H1 (cell line): ENCODE measurements at regions of chrX and their contacts with region 1.

Region 1: DNA sequence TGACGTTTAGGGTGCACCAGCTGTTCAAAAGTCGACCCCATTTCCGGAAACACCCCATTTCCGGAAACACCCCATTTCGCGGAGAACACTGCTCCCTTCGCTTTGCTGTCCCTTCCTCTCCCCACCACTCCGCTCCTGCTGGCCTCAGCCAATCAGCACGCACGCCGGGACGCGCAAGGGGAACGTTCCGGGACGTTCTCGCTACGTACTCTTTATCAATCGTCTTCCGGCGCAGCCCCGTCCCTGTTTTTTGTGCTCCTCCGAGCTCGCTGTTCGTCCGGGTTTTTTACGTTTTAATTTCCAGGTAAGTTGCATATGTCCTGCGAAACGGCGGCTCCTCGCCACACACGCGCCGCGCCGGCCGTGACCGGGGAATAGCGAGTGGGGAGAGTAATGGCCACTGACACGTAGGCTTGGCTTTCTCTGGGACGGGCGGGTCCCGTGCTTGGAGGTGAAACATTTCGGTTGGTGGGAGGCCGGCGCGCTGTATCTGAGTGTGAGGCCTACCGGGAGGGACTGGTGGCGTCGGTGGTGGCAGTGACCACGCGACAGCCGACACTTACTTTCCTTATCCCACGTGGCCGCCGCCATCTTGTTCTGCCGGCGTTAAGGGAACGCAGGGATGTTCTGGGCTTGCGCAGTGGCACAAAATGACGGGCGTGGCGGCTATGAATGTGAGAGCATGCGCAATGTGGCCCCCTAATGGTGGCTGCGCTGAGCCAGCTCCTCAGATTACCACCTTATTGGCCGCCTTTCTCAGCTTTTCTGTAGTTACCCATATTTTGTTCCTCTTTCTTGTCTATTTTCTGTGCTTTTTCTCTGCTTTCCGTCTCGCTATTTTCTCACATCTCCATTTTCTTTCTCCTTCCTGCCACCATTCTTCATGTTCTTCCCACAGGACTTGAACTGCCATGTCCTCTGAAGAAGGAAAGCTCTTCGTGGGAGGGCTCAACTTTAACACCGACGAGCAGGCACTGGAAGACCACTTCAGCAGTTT is at the start of gene RBM3:
- DNase-seq: peak; percentile 71 to 77
- H3K4me3 ChIP-seq: peak within 1 kb of the TSS; percentile 75 to 96 (median 84)
- H3K27ac ChIP-seq: peak within 1 kb of the TSS; percentile 98
- H3K4me1 ChIP-seq: peaks cover 0 to 5% (median 0%) of the 10 kb centered on the region in 4 experiments; a peak in 5 of 7 replicates
- H3K27me3 ChIP-seq: no peaks in the 10 kb centered on the region
- CTCF ChIP-seq: peak; percentile 2 to 39 (median 35); a peak in 2 of 4 replicates
- EP300 ChIP-seq: no peak
- POLR2A ChIP-seq: peak; percentile 55 to 92
- RAD21 ChIP-seq: no peak
- total RNA-seq, gene RBM3: 159 and 164 TPM in 2 replicates

Region 2: DNA sequence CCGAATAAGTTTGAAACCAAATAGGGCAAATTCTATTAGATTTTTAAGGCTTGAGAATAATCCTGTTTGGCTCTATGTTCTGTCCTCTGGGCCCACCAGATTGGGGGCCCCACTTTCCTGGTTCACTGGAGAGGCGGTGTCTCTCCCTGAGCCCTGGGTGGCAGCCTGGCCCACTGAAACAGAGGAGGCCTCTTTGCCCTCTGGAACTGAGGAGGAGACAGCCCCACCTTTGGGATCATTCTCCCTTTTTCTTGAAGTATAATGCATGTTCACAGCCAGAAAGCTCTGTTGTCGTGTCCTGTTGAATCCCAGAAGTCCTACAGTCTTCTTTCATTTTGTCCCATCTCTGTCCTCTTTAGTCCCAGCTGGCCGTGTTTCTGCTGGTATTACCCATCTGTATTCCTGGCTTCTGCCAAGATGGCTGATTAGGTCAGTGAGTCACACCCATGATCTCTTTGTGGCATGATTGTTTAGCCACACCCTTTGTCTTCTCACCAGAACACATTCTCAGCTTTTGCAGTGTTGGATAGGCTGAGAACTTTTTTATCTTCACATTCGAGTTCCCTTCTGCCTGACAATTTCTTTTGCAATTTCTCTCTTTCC is 43.1 kb before region 1 on chrX:
- CTCF ChIA-PET with region 1: no interaction called
- POLR2A ChIA-PET with region 1: interaction called, 10 read pairs
- DNase-seq: no peak
- H3K4me3 ChIP-seq: no peak overlapping the region
- H3K27ac ChIP-seq: no peak overlapping the region
- H3K4me1 ChIP-seq: no peaks in the 10 kb centered on the region
- H3K27me3 ChIP-seq: no peaks in the 10 kb centered on the region
- CTCF ChIP-seq: no peak
- EP300 ChIP-seq: no peak
- POLR2A ChIP-seq: no peak
- RAD21 ChIP-seq: no peak

Region 3: DNA sequence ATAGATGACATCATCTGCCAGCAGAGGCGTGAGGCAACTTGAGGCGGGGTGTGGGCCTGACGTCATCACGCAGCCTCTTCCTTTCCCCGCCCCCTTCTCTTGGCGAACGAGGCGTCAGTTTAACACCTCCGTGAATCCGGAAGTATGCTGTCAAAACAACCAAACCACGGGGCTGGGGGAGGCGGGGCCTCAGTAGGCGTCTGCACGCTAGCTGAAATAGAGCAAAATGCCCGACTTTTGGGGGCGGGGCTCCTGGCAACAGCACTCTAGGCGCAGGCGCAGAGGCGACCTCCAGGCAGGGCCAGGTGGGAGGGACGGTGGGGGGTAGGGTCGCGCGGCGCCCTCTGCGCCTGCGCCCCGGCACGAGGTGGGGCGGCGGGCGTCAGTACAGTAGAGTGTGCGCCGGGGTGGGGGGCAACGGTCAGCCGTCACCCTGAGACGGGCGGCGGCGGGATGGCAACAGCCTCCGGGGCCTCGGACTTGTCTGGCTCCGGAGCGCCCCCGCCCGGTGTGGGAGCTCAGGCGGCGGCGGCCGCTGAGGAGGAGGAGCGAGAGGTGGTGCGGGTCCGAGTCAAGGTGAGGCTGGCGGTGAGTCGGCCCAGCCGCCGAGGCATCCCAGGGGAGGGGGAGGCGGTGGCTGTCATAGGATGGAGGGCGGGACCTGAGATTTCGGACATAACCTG is 35.1 kb before region 1 on chrX and contains the start of gene TBC1D25:
- CTCF ChIA-PET with region 1: no interaction called
- POLR2A ChIA-PET with region 1: interaction called, 22 read pairs
- DNase-seq: peak; percentile 91 to 93
- H3K4me3 ChIP-seq: peak within 1 kb of the TSS; percentile 46 to 82 (median 52)
- H3K27ac ChIP-seq: no peak within 1 kb of the TSS
- H3K4me1 ChIP-seq: no peaks in the 10 kb centered on the region
- H3K27me3 ChIP-seq: no peaks in the 10 kb centered on the region
- CTCF ChIP-seq: peak in 1 of 3 experiments; percentile 22; a peak in 1 of 4 replicates
- EP300 ChIP-seq: no peak
- POLR2A ChIP-seq: no peak
- RAD21 ChIP-seq: no peak
- total RNA-seq, gene TBC1D25: 6.5 and 9.7 TPM in 2 replicates

Region 4: GRCh38 chrX:48559636-48560035 is 14.9 kb before region 1 on chrX:
- CTCF ChIA-PET with region 1: no interaction called
- POLR2A ChIA-PET with region 1: interaction called, 17 read pairs
- DNase-seq: no peak
- H3K4me3 ChIP-seq: no peak overlapping the region
- H3K27ac ChIP-seq: no peak overlapping the region
- H3K4me1 ChIP-seq: no peaks in the 10 kb centered on the region
- H3K27me3 ChIP-seq: no peaks in the 10 kb centered on the region
- CTCF ChIP-seq: no peak
- EP300 ChIP-seq: no peak
- POLR2A ChIP-seq: no peak
- RAD21 ChIP-seq: no peak

Region 5: GRCh38 chrX:48589482-48590162 is 15.1 kb after region 1 on chrX:
- CTCF ChIA-PET with region 1: interaction called, 3 read pairs
- POLR2A ChIA-PET with region 1: interaction called, 27 read pairs
- DNase-seq: no peak
- H3K4me3 ChIP-seq: no peak overlapping the region
- H3K27ac ChIP-seq: no peak overlapping the region
- H3K4me1 ChIP-seq: no peaks in the 10 kb centered on the region
- H3K27me3 ChIP-seq: no peaks in the 10 kb centered on the region
- CTCF ChIP-seq: no peak
- EP300 ChIP-seq: no peak
- POLR2A ChIP-seq: no peak
- RAD21 ChIP-seq: no peak

Region 6: GRCh38 chrX:48597353-48598264 is 23.0 kb after region 1 on chrX and contains the start of gene WDR13:
- CTCF ChIA-PET with region 1: no interaction called
- POLR2A ChIA-PET with region 1: interaction called, 27 read pairs
- DNase-seq: peak; percentile 84 to 89
- H3K4me3 ChIP-seq: peak within 1 kb of the TSS; percentile 76 to 96 (median 84)
- H3K27ac ChIP-seq: peak within 1 kb of the TSS; percentile 78; the same call in 1 of the 2 replicates
- H3K4me1 ChIP-seq: peaks cover 0 to 3% (median 1%) of the 10 kb centered on the region in 4 experiments; a peak in 2 of 7 replicates
- H3K27me3 ChIP-seq: no peaks in the 10 kb centered on the region
- CTCF ChIP-seq: no peak
- EP300 ChIP-seq: no peak
- POLR2A ChIP-seq: peak in 1 of 2 experiments; percentile 16; a peak in 1 of 3 replicates
- RAD21 ChIP-seq: no peak
- total RNA-seq, gene WDR13: 19.4 and 19.7 TPM in 2 replicates

Region 7: GRCh38 chrX:48617542-48618340 is 43.2 kb after region 1 on chrX:
- CTCF ChIA-PET with region 1: no interaction called
- POLR2A ChIA-PET with region 1: interaction called, 10 read pairs
- DNase-seq: no peak
- H3K4me3 ChIP-seq: no peak overlapping the region
- H3K27ac ChIP-seq: no peak overlapping the region
- H3K4me1 ChIP-seq: no peaks in the 10 kb centered on the region; a peak in 1 of 7 replicates
- H3K27me3 ChIP-seq: no peaks in the 10 kb centered on the region
- CTCF ChIP-seq: no peak
- EP300 ChIP-seq: no peak
- POLR2A ChIP-seq: no peak
- RAD21 ChIP-seq: no peak